ENCODE measurements at regions of chr6 and their contacts with region 1.

Region 1: GRCh38 chr6:135329851-135330803 is 149.0 kb downstream of the MYB start:
- DNase-seq: peak; percentile 68
- ATAC-seq: peak; percentile 94
- H3K4me3 ChIP-seq: 0 out of 2 replicates have a peak overlapping the region, but pooled peaks have one; percentile 11
- H3K27ac ChIP-seq: peak overlapping the region; percentile 67
- H3K4me1 ChIP-seq: peaks cover 15% of the 10 kb centered on the region
- H3K27me3 ChIP-seq: no peaks in the 10 kb centered on the region
- CTCF ChIP-seq: peak in 2 of 3 experiments; percentile 2 to 9; a peak in 1 of 6 replicates
- EP300 ChIP-seq: peak; percentile 77 to 85; a peak in 3 of 4 replicates
- POLR2A ChIP-seq: no peak
- RAD21 ChIP-seq: peak; percentile 48

Region 2: DNA sequence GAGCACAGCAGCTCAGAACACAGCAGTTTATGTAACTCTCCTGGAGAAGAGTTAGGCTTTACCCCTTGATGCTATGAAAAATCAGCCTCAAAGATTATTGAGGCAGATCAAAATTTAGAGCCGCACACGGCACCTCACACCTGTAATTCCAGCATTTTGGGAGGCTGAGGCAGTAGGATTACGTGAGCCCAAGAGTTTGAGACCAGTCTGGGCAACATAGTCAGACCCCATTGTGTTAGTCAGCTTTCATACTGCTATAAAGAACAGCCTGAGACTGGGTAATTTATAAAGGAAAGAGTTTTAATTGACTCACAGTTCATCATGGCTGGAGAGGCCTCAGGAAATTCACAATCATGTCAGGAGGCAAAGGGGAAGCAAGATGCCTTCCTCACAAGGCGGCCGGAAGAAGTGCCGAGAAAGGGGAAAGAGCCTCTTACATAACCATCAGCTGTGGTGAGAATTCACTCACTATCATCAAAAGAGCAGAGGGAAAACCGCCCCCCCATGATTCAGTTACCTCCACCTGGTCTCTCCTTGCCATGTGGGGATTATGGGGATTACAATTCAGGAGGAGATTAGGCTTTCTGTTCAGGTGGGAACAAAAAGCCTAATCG is 1099.9 kb before region 1 on chr6:
- CTCF ChIA-PET with region 1: no interaction called
- POLR2A ChIA-PET with region 1: no interaction called
- RAD21 ChIA-PET with region 1: no interaction called
- SMC1A ChIA-PET with region 1: no interaction called
- in situ Hi-C with region 1: no loop called
- intact Hi-C with region 1: no loop called
- DNase-seq: no peak
- ATAC-seq: no peak
- H3K4me3 ChIP-seq: no peak overlapping the region
- H3K27ac ChIP-seq: no peak overlapping the region
- H3K4me1 ChIP-seq: peaks cover 10% of the 10 kb centered on the region
- H3K27me3 ChIP-seq: no peaks in the 10 kb centered on the region
- CTCF ChIP-seq: no peak
- EP300 ChIP-seq: no peak
- POLR2A ChIP-seq: no peak
- RAD21 ChIP-seq: no peak

Region 3: GRCh38 chr6:135346747-135347146 is 16.6 kb after region 1 on chr6:
- CTCF ChIA-PET with region 1: interaction called, 5 read pairs
- POLR2A ChIA-PET with region 1: no interaction called
- RAD21 ChIA-PET with region 1: no interaction called
- SMC1A ChIA-PET with region 1: interaction called, 11 read pairs
- in situ Hi-C with region 1: no loop called
- intact Hi-C with region 1: no loop called
- DNase-seq: no peak
- ATAC-seq: peak; percentile 32
- H3K4me3 ChIP-seq: no peak overlapping the region
- H3K27ac ChIP-seq: no peak overlapping the region
- H3K4me1 ChIP-seq: no peaks in the 10 kb centered on the region
- H3K27me3 ChIP-seq: no peaks in the 10 kb centered on the region
- CTCF ChIP-seq: no peak
- EP300 ChIP-seq: no peak
- POLR2A ChIP-seq: no peak
- RAD21 ChIP-seq: no peak

Region 4: GRCh38 chr6:135382182-135382628 is 52.1 kb after region 1 on chr6:
- CTCF ChIA-PET with region 1: no interaction called
- POLR2A ChIA-PET with region 1: no interaction called
- RAD21 ChIA-PET with region 1: no interaction called
- SMC1A ChIA-PET with region 1: interaction called, 3 read pairs
- in situ Hi-C with region 1: no loop called
- intact Hi-C with region 1: loop called (anchors 1 kb)
- DNase-seq: peak; percentile 37
- ATAC-seq: peak; percentile 97
- H3K4me3 ChIP-seq: no peak overlapping the region
- H3K27ac ChIP-seq: peak overlapping the region; percentile 63
- H3K4me1 ChIP-seq: peaks cover 12% of the 10 kb centered on the region; the same call in 1 of the 2 replicates
- H3K27me3 ChIP-seq: no peaks in the 10 kb centered on the region
- CTCF ChIP-seq: no peak
- EP300 ChIP-seq: peak in 1 of 2 experiments; percentile 68; a peak in 1 of 4 replicates
- POLR2A ChIP-seq: no peak
- RAD21 ChIP-seq: no peak

Measured in GM12878 (cell line).